ENCODE measurements at regions of chr13 and their contacts with region 1.

Region 1: DNA sequence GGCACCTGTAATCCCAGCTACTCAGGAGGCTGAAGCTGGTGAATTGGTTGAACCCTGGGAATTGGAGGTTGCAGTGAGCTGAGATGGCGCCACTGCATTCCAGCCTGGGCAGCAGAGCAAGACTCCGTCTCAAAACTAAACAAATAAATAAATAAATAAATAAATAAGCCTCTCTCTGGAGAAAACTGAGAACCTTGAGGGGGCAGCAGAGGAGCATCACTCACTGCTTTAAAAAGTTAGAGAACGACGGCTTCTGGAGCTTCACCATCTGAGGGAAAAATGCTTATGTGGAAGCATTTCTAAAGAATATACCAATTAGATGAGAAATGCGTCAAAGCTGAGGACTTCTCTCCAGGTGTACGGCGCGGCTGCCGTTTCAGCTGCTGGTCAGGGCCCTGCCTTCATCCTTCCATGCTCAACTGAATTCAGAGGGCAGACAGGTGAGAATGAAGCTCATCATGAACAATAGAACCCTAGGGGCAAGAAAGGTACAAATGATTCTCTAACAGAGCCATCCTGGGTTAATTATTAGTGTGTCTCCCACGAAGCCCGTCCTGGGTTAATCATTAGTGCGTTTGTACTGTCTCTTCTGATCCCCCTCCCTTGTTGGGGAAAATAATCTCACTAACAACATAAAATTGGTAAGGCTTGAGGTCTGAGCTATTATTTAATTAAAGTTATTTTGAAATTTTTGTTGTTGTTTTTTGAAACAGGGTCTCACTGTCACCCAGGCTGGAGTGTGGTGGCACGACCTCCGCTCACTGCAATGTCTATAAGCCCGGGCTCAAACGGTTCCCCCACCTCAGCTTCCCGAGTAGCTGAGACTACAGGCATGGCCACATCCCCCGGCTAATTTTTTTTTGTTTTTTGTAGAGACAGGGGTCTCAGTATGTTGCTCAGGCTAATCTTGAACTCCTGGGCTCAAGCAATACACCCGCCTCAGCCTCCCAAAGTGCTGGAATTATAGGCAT is 80.1 kb downstream of the IPO5 start:
- DNase-seq: no peak

Region 2: GRCh38 chr13:98429977-98430736 is 396.6 kb after region 1 on chr13:
- intact Hi-C with region 1: loop called (anchors 10 kb)
- DNase-seq: no peak

Measured in cardiac septum (tissue), 1 donor.